GM10248 (cell line): ENCODE measurements at regions of chr10 and their contacts with region 1.

Region 1: GRCh38 chr10:35178331-35178730 is 51.7 kb downstream of the CREM start:
- DNase-seq: no peak
- CTCF ChIP-seq: no peak

Region 2: GRCh38 chr10:34994565-34995142 is 183.7 kb before region 1 on chr10:
- CTCF ChIA-PET with region 1: no interaction called
- POLR2A ChIA-PET with region 1: no interaction called
- DNase-seq: peak; percentile 81
- CTCF ChIP-seq: peak; percentile 55

Region 3: DNA sequence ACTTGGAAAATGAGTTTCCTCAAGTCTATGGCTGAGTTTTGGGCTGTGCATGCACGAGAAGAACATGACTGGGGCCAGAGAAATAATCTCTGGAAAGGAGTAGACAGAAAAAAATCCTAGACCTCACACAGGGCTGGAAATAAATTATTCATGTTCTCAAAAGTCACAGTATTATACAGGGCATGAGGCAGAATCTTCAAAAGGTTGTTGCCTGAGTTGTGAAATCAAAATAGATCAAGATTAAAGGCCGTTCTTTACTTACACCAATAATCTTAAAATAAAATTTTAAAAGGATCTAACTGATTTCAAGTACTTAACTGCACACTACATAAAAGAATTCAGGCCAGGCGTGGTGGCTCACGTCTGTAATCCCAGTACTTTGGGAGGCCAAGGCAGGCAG is 65.8 kb before region 1 on chr10:
- CTCF ChIA-PET with region 1: no interaction called
- POLR2A ChIA-PET with region 1: no interaction called
- DNase-seq: no peak
- CTCF ChIP-seq: no peak

Region 4: GRCh38 chr10:35136263-35136815 is 42.0 kb before region 1 on chr10:
- CTCF ChIA-PET with region 1: interaction called, 11 read pairs
- POLR2A ChIA-PET with region 1: no interaction called
- DNase-seq: peak; percentile 34
- CTCF ChIP-seq: no peak

Region 5: DNA sequence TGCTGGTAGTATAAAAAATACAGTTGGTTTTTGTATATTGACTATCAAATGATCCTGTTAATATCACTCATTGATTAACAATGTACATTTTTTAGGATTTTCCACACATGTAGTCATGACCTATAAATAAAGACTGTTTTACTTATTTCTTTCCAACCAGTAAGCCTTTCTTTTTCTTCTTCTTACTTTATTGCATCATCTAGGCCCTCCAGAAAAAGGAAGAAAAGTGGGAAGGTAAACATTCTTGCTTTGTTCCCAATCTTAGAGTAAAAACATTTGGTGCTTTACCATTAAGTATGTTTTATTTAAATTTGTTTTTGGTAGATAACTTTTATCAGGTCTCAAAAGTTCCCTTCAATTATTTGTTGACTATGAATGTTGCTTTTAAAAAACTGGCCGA is 110.9 kb after region 1 on chr10:
- CTCF ChIA-PET with region 1: no interaction called
- POLR2A ChIA-PET with region 1: no interaction called
- DNase-seq: no peak
- CTCF ChIP-seq: no peak